ENCODE measurements at regions of chr2 and their contacts with region 1.

Region 1: GRCh38 chr2:18520451-18521425 is 39.7 kb downstream of the RDH14 start:
- DNase-seq: peak; percentile 81
- H3K4me3 ChIP-seq: no peak overlapping the region
- H3K27ac ChIP-seq: no peak overlapping the region
- H3K4me1 ChIP-seq: no peaks in the 10 kb centered on the region
- H3K27me3 ChIP-seq: no peaks in the 10 kb centered on the region
- CTCF ChIP-seq: peak; percentile 95

Region 2: DNA sequence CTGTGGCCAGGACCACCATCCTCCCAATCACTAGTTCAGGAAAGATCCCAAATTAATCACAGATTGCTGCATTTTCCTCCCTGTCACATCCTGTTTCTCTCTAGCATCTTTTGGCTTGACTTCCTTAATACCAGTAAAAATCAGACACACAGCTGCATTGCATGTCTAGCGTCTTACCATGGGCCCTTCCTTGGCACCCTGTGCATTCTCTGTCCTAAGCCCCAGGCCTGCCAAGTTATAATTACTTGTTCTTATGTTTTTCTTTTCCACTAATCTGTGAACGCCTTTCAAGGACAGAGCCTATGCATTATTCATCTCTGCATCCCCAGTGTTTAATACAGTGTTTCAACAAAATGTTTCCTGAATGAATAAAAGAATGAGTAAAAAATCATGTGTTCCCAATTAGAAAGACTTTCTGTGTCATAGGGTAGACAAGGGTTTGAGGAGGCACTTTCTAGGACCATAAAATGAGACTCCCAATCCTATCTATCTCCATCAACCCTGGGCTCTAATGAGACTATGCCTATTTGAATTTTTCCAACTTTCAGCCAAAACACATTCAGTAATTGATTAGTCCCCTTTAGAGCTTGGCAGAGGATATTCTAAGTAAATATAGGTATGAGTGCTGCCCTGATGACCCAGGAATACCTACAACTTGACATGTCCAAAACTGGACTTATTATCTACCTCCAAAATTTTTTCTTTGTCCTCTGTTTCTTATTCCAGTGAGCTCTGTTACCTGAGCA is 78.9 kb after region 1 on chr2:
- CTCF ChIA-PET with region 1: no interaction called
- POLR2A ChIA-PET with region 1: no interaction called
- intact Hi-C with region 1: loop called (anchors 2 kb)
- DNase-seq: peak; percentile 93
- H3K4me3 ChIP-seq: no peak overlapping the region
- H3K27ac ChIP-seq: peak overlapping the region; percentile 34
- H3K4me1 ChIP-seq: peaks cover 22% of the 10 kb centered on the region
- H3K27me3 ChIP-seq: no peaks in the 10 kb centered on the region
- CTCF ChIP-seq: no peak

Region 3: GRCh38 chr2:18749912-18750526 is 229.3 kb after region 1 on chr2:
- CTCF ChIA-PET with region 1: interaction called, 4 read pairs
- POLR2A ChIA-PET with region 1: no interaction called
- intact Hi-C with region 1: loop called (anchors 1 kb)
- DNase-seq: peak; percentile 65
- H3K4me3 ChIP-seq: no peak overlapping the region
- H3K27ac ChIP-seq: no peak overlapping the region
- H3K4me1 ChIP-seq: no peaks in the 10 kb centered on the region
- H3K27me3 ChIP-seq: peaks cover 6% of the 10 kb centered on the region
- CTCF ChIP-seq: peak; percentile 88

Region 4: DNA sequence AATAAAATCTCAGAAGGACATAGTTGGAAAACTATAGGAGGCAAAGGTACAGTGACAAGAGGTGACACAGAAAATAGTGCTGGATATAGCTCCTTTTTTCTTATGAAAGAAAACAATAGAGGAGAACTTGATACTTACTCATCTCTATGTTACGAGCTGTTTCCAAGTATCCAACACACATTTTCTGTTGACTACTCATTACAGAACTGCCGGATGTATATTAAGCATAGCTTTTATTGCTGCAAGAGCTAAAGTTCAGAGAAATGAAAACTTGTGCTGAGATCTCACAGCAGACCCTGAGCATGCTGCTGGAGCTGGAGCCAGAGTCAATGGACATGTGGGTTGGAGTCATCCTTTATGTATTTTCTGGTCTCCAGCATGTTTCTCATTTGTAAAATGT is 278.7 kb after region 1 on chr2:
- CTCF ChIA-PET with region 1: no interaction called
- POLR2A ChIA-PET with region 1: no interaction called
- intact Hi-C with region 1: no loop called
- DNase-seq: no peak
- H3K4me3 ChIP-seq: no peak overlapping the region
- H3K27ac ChIP-seq: no peak overlapping the region
- H3K4me1 ChIP-seq: no peaks in the 10 kb centered on the region
- H3K27me3 ChIP-seq: no peaks in the 10 kb centered on the region
- CTCF ChIP-seq: no peak

Region 5: GRCh38 chr2:18855027-18855426 is 334.3 kb after region 1 on chr2:
- CTCF ChIA-PET with region 1: no interaction called
- POLR2A ChIA-PET with region 1: no interaction called
- intact Hi-C with region 1: loop called (anchors 10 kb)
- DNase-seq: no peak
- H3K4me3 ChIP-seq: no peak overlapping the region
- H3K27ac ChIP-seq: no peak overlapping the region
- H3K4me1 ChIP-seq: no peaks in the 10 kb centered on the region
- H3K27me3 ChIP-seq: peaks cover 4% of the 10 kb centered on the region
- CTCF ChIP-seq: peak; percentile 52

Measured in A673 (cell line).